Posterior vena cava (tissue), 2 donors: ENCODE measurements at regions of chr19 and their contacts with region 1.

Region 1: DNA sequence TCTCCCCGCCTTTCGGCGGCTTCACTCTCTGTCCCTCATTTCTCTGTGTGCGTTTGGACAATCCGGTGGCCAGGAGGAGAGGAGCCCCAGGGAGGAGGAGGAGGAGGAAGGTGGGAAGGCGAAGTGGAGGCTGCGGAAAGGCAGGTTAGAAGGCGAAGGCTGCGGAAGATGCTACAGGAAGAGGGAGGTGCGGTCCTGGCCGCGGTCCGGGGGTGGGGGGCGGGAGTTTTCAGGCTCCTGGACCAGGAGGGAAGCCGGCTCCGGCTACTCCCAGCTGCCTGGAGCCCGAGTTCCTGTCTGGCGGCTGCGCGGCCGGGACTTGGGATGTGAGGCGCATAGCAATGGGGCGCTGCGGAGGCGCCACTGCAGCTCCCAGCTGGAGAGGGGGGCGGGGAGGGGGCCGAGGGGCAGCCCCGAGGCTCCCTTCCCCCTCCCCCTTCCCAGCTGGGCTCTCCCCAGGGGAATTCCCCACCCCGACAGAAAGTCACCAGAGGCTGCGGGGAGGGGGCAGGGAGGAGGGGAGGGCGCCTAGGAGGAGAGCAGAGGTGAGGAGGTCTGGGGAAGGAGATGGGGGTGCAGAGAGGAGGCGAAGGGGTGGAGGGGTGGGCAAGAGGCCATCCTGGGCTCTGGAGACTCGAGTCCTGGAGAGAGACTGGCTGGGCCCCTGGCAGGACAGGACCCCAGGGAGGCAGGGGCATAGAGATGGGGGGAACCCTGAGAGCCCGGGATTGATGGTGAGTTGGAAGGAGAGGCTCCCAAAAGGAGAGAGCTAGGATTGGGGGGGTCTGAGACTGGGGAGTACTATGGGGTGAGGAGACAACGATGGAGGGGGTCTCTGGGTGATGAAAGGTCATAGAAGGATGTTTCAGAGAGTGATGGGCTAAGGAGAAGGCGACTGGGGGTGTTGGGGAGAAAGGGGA is 2.0 kb downstream of the LRRC4B start:
- DNase-seq: no peak

Region 2: DNA sequence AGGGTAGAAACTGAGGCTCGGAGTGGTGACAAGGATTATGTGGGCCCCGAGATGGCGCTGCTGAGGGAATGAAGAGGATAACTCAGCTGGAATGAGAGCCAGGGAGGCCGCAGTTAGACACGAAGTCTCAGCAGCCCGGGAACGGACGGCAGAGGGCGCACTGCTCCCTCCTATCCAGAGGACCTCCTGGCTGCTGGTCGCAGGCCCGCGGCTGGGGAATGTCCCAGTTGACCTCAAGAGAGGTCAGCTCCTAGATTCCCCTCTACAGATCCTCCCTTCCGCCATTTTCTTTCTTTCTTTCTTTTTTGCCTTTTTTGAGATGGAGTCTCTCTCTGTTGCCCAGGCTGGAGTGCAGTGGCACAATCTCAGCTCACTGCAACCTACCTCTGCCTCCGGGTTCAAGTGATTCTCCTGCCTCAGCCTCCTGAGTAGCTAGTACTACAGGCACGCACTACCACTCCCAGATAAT is 28.4 kb before region 1 on chr19:
- intact Hi-C with region 1: loop called in 1 of 2 experiments (anchors 1 kb)
- DNase-seq: peak; percentile 90